ENCODE measurements at regions of chr15 and their contacts with region 1.

Region 1: DNA sequence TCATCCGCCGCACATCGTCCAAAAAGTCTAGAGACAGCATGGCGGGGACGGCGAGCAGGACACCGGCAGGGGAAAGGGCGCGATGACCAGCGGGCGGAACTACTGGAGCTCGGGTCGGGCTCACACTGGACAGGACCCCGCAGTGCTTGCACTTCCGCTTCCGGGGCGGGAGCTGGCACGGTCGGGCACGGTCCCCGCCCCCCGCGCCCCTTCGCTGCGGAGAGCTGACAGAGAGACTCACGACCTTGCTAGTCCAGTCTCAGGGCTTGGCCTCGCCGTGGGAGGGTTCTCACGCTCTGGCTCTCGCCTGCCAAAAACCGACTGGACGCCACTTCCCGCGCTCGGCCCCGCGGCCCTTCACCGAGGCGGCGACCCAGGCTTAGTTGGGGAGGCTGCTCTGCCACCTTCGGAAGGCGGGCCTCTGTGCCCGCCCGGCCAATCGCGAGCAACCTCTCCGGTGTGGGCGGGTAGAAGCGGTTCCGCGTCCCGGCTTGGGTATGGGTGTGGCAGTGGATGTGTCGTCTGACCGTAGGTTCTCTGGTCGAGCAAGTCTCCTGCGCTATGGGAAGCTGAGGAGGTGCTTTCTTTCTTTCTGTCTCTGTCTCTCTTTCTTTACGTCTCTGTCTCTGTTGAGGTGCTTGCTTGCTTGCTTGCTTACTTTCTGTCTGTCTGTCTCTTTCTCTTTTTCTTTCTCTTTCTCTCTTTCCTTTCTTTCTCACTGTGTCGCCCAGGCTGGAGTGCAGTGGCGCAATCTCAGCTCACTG is at the start of gene SEC11A:
- DNase-seq: peak; percentile 96
- ATAC-seq: peak; percentile 97
- H3K4me3 Mint-ChIP-seq: peak within 1 kb of the TSS; percentile 92
- H3K27ac Mint-ChIP-seq: peak within 1 kb of the TSS; percentile 94
- H3K4me1 Mint-ChIP-seq: peaks cover 50% of the 10 kb centered on the region
- H3K27me3 Mint-ChIP-seq: no peaks in the 10 kb centered on the region
- total RNA-seq, gene SEC11A: 96.6 to 122 TPM

Region 2: DNA sequence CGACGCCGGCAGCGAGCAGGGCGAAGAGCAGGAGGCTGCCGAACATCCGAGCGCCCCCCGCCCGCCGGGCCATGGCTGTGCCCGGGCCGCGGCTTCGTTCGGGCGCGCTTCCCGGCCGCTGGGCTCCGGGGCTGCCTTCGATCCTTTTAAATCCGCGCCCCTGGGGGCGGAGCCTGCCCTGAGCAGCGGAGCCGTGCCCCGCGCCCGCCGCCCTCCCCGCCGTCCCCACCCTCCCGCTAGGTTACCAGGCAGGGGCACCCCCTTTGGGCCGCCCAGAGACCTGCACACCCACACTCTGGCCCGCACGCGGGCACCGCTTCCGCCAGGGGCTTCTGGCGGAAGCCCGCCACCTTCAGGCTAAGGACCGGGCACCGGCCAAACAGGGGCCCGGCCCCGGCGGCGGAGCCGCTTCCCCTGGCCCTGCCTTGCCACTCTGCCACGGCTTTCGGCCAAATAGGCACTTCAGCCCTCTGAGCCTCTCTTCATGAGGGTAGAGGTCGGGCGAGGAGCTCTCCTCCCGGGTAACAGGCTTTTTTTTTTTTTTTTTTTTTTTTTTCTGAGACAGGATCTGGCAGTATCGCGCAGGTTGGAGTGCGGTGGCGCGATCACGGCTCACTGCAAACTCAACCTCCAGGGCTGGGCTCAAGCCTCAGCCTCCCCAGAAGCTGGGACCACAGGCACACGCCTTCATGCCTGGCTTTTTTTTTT is 58.0 kb before region 1 on chr15 and contains the start of gene NMB:
- CTCF ChIA-PET with region 1: interaction called, 21 read pairs
- DNase-seq: peak; percentile 86
- ATAC-seq: peak; percentile 68
- H3K4me3 Mint-ChIP-seq: peak within 1 kb of the TSS; percentile 65
- H3K27ac Mint-ChIP-seq: peak within 1 kb of the TSS; percentile 61
- H3K4me1 Mint-ChIP-seq: peaks cover 34% of the 10 kb centered on the region
- H3K27me3 Mint-ChIP-seq: no peaks in the 10 kb centered on the region
- total RNA-seq, gene NMB: 1.5 to 1.8 TPM

Region 3: DNA sequence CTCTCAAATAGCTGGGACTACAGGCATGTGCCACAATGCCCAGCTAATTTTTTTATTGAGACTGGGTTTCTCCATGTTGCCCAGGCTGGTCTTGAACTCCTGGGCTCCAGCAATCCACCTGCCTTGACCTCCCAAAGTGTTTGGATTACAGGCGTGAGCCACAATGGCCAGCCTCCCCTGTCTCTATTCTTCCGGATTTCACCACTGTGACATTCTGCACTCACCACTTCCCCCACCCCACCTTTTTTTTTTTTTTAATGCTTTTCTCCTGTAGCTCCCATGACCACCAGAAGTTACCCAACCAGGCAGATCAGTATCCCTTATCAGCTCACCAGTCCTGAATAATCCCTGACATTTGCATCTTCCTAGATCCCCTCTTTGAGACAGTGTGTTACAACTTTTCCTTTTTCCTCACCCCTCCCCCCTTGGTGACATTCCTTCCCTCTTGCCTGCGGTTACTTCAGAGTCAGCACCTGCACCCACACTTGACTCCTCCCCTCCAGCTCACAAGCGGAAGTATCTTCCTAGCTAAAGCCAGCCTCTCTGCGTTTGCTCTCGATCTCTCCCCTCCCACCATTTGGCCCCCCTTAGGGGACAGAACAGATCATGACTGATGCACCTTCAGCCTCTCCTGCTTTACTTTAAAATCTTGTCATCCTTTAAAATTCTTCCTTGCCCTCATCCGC is 18.7 kb after region 1 on chr15:
- CTCF ChIA-PET with region 1: interaction called, 92 read pairs
- DNase-seq: peak; percentile 89
- ATAC-seq: peak; percentile 74
- H3K4me3 Mint-ChIP-seq: peak overlapping the region; percentile 63
- H3K27ac Mint-ChIP-seq: peak overlapping the region; percentile 98
- H3K4me1 Mint-ChIP-seq: peaks cover 57% of the 10 kb centered on the region
- H3K27me3 Mint-ChIP-seq: no peaks in the 10 kb centered on the region

Region 4: GRCh38 chr15:84748274-84749110 is 32.3 kb after region 1 on chr15 and contains the start of gene ZNF592:
- CTCF ChIA-PET with region 1: interaction called, 41 read pairs
- DNase-seq: peak; percentile 83
- ATAC-seq: peak; percentile 69
- H3K4me3 Mint-ChIP-seq: peak within 1 kb of the TSS; percentile 93
- H3K27ac Mint-ChIP-seq: peak within 1 kb of the TSS; percentile 93
- H3K4me1 Mint-ChIP-seq: peaks cover 55% of the 10 kb centered on the region
- H3K27me3 Mint-ChIP-seq: no peaks in the 10 kb centered on the region
- total RNA-seq, gene ZNF592: 32.9 to 39.7 TPM